ENCODE measurements at regions of chr11 and their contacts with region 1.

Region 1: DNA sequence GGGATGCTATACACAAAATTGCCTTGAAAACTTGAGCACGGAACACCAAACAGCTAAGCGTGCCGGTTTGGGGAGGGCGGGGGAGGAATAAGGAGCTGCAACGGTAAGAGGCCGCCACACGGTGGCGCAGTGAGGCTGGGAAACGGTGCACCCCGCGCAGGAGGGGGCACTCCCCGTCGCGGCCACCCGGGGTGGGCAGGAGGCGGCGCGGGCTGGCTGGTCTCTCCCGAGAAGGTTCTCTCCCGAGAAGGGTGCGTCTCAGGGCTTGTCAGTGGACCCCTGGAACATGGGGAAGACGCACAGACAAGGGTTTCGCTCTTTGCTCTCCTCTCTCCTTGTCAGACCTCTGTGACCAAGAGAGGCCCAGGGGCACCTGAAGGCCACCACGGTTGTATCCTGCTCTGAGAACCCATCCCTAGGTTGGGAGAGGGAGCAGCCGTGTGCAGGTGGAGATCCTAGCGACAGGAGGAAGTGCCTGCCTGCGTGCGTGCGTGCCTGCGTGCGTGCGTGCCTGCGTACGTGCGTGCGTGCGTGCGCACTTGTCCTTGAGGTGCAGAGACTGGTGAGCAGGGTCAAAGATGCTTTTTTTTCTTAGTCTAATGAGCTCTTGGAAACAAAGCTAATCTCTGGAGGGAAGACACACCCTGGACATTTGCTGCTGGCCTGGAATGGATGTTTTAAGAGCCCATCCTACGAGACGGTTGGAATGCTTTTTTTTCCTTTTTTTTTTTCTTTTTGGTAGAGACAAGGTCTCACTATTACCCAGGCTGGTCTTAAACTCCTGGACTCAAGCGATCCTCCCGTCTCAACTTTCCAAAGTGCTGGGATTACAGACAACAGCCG is 18.1 kb upstream of the JAM3 start:
- DNase-seq: no peak
- H3K4me3 ChIP-seq: peak overlapping the region; percentile 32
- H3K27me3 ChIP-seq: peaks cover 2% of the 10 kb centered on the region
- CTCF ChIP-seq: peak; percentile 90

Region 2: GRCh38 chr11:133927690-133928627 is 122.8 kb before region 1 on chr11:
- CTCF ChIA-PET with region 1: interaction called, 16 read pairs
- POLR2A ChIA-PET with region 1: interaction called, 3 read pairs
- DNase-seq: no peak
- H3K4me3 ChIP-seq: no peak overlapping the region; the same call in 1 of the 2 replicates
- H3K27me3 ChIP-seq: no peaks in the 10 kb centered on the region; the same call in 1 of the 2 replicates
- CTCF ChIP-seq: peak; percentile 94

Region 3: DNA sequence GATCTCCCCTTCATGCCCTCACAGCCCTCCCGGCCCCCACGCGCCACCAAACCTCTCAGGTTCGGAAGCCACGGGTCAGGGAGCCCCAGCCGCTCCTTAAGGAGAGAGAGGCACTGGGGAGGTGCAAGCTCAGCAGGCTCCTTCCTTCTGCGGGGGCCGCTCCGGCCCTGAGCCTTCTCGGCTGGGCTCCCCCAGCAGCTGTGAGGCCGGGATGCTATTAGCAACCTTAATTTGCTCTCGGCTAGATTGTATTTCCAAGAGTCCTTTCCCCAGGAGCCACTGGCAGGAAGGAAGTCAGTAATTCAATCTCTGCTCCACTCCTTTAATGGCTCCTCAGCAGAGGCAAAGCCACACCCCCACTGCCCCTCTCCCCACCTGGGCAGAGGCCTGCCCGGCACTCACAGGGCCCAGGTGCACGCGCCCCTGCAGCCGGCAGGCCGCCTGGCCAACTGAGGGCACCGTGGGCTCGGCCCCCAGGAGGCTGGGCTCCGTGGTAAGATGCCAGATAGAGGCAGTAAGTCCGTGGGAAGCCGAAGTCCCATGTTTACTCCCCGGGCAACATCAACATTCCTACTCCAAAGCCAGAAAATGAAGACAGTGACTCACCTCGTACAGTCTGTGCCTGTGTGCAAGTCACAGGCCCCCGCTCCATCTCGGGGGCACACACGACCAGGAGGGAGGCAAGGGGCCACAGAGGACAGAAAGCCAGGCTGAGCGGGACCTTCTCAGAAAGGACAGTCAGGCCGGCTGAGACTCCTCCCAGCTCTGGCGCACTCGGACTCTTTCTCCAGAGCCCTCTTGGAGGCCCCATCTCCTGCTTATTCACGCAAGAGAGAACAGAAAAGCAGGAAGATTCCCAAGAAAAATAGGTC is 99.2 kb before region 1 on chr11:
- CTCF ChIA-PET with region 1: no interaction called
- POLR2A ChIA-PET with region 1: no interaction called
- DNase-seq: no peak
- H3K4me3 ChIP-seq: no peak overlapping the region
- H3K27me3 ChIP-seq: peaks cover 42% of the 10 kb centered on the region
- CTCF ChIP-seq: no peak

Region 4: DNA sequence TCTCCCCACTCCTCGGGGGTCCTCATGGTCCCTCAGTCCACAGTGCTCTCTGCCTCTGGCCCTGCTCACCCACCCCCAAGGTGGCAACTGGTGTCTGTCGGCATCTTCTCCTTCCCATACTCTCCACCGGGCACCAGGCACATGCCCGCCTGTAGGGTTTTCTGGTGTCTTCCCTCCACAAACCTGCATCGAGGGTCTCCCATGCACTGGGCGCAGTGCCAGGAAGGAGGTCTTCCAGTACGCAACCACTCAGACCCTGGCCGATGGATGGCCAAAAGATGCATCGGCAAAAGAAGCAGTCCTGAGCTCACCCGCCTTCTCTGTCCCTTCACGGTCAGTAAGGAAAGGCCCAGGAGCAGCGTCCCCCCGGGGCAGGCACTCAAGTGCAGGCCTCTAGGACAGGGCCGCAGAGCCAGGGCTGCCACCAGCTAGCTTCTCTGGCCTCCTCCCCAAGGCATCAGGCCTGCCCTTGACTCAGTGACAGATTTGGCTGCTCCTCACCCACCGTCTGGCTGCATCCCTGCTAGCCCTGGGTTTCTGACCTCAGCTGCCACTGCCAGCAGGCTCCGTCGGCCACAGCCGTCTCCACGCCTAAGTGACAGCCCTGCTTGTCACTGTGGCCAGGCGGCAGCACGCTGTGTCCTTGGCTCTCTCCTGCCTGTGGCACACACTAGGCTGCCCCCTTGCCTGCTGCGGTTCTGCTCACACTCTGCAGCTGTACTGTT is 61.9 kb before region 1 on chr11:
- CTCF ChIA-PET with region 1: no interaction called
- POLR2A ChIA-PET with region 1: no interaction called
- DNase-seq: no peak
- H3K4me3 ChIP-seq: no peak overlapping the region
- H3K27me3 ChIP-seq: peaks cover 1% of the 10 kb centered on the region; the same call in 1 of the 2 replicates
- CTCF ChIP-seq: no peak

Region 5: GRCh38 chr11:134004496-134005172 is 46.1 kb before region 1 on chr11:
- CTCF ChIA-PET with region 1: no interaction called
- POLR2A ChIA-PET with region 1: no interaction called
- DNase-seq: no peak
- H3K4me3 ChIP-seq: no peak overlapping the region
- H3K27me3 ChIP-seq: peaks cover 5% of the 10 kb centered on the region
- CTCF ChIP-seq: no peak

Region 6: DNA sequence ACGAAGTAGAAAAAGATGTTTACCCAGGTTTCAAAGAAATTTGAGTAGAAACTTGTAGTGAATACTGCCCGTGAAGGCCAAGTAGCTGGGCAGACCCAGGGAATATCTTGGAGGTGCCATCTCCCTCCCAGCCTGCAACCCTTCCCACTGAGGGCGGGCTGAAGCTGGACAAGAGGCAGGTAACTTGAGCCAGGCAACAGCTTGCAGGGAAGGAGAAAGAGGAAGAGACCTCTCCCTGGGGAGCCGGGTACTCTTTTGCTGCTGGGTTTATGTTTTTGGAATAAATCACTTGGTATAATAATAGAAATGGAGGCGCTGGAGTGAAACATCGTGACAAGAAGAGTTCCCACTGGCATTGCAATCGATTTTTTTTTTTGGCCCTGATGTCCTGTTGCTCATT is 31.3 kb before region 1 on chr11:
- CTCF ChIA-PET with region 1: no interaction called
- POLR2A ChIA-PET with region 1: no interaction called
- DNase-seq: no peak
- H3K4me3 ChIP-seq: no peak overlapping the region
- H3K27me3 ChIP-seq: peaks cover 2% of the 10 kb centered on the region; the same call in 1 of the 2 replicates
- CTCF ChIP-seq: no peak

Region 7: DNA sequence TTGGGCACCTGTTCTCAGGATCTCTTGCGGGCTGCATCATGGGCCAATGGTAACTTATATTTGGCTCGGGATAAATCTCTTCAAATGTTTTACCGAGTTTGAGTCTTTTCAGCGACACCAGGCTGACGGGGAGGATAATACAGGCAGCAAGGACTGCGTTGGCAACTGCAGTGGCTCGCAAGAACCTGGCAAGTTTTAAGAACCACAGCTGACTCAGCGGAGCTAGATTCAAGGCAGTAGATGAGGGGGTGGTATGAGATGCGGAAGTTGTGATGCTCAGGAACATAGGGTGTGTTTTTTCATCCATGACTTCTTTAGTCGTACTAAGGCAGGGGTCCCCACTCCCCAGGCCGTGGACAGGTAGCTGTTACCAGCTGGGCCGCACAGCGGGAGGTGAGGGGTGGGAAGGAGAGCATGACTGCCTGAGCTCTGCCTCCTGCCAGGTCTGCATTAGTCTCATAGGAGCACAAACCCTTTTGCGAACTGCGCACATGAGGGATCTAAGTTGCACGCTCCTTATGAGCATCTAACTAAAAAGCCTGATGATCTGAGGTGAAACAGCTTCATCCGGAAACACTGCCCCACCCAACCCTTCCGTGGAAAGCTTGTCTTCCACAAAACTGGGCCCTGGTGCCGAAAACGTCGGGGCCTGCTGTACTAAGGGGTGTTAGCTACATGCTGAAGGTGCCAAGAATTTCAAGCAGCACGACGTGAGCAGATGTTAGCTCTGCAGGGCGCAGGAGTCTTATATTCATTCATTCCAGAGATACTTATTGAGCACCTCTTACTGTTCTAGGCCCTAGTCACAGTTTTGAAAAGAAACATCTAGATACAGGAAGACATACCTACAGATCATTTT is 11.7 kb after region 1 on chr11:
- CTCF ChIA-PET with region 1: interaction called, 35 read pairs
- POLR2A ChIA-PET with region 1: no interaction called
- DNase-seq: no peak
- H3K4me3 ChIP-seq: no peak overlapping the region
- H3K27me3 ChIP-seq: peaks cover 17% of the 10 kb centered on the region
- CTCF ChIP-seq: no peak

Region 8: GRCh38 chr11:134124660-134125451 is 74.1 kb after region 1 on chr11:
- CTCF ChIA-PET with region 1: interaction called, 12 read pairs
- POLR2A ChIA-PET with region 1: no interaction called
- DNase-seq: no peak
- H3K4me3 ChIP-seq: peak overlapping the region; percentile 37
- H3K27me3 ChIP-seq: no peaks in the 10 kb centered on the region
- CTCF ChIP-seq: no peak

Region 9: DNA sequence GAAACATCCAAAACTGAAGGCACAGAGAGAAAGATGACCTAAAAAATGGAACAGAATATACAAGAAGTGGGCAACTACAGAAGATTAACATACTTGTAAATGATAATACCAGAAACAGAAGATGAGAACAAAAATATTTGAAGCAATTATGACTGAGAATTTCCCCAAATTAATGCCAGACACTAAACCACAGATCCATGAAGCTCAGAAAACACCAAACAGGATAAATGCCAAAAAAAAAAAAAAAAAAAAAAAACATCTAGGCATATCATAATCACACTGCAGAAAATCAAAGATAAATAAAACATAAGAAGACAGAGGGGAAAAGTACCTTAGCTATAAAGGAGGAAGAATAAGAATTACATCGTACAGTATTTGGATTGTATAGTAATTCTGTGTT is 83.4 kb after region 1 on chr11:
- CTCF ChIA-PET with region 1: interaction called, 80 read pairs
- POLR2A ChIA-PET with region 1: interaction called, 3 read pairs
- DNase-seq: no peak
- H3K4me3 ChIP-seq: no peak overlapping the region
- H3K27me3 ChIP-seq: no peaks in the 10 kb centered on the region
- CTCF ChIP-seq: no peak

Region 10: GRCh38 chr11:134139873-134140331 is 89.1 kb after region 1 on chr11:
- CTCF ChIA-PET with region 1: interaction called, 80 read pairs
- POLR2A ChIA-PET with region 1: interaction called, 3 read pairs
- DNase-seq: peak; percentile 27
- H3K4me3 ChIP-seq: no peak overlapping the region
- H3K27me3 ChIP-seq: no peaks in the 10 kb centered on the region
- CTCF ChIP-seq: peak; percentile 85

Region 11: DNA sequence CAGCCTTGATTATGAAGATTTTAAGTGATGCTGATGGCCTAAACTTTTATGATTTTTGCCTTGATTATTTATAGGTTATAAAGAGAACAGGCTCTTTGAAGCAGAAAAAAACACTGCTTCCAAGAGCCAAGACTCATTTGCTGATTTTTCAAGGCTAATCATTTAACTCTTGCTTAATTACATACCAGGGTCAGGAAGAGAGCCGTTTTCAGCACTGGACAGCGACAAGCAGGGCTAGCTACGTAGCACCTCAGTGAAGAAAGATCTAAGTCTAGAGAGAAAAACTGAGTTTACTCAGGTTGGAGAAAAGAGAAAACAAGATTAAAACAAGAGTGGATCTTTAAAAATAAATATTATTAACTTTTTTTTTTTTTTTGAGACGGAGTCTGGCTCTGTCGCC is 976.7 kb after region 1 on chr11:
- CTCF ChIA-PET with region 1: no interaction called
- POLR2A ChIA-PET with region 1: interaction called, 14 read pairs
- DNase-seq: no peak
- H3K4me3 ChIP-seq: no peak overlapping the region
- H3K27me3 ChIP-seq: no peaks in the 10 kb centered on the region
- CTCF ChIP-seq: no peak

Measured in BJ (cell line).